Right ventricle myocardium inferior (tissue), 1 donor: ENCODE measurements at regions of chr3 and their contacts with region 1.

Region 1: GRCh38 chr3:64908292-64908691 is 220.5 kb upstream of the ADAMTS9 start:
- DNase-seq: no peak
- ATAC-seq: peak; percentile 53

Region 2: DNA sequence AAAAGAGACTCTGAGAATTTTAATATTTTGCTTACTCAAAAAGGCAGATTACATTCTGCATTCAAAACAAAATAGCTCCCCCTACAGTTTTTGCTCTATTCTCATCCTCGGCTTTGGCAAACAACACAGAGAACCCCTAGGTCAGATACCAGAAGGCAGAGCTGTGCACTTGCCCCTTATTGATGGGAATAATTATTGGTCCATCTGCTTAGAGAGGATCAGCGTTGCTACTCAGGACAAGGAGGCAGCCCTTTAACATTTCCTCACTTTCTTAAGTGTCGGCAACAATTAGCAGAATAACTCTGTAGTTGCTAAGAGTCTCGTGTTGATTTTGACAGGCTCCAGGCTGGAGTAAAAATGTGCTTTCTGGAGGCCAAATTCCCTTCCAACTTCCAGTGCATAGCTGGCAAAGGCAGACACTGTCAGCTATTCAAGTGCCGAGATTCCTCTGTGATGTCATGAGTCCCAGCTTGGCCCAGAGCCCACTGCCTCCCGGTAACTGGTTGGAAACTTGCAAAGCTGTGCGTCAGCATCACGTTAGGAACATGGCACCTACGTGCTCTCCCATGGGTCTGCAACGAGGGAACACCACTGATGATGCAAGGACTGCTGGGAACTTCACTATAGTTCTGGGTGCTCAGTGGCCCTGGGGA is 262.2 kb after region 1 on chr3:
- intact Hi-C with region 1: loop called (anchors 10 kb)
- DNase-seq: peak; percentile 86
- ATAC-seq: peak; percentile 88